ENCODE measurements at regions of chr18 and their contacts with region 1.

Region 1: GRCh38 chr18:3481696-3482210 is 31.8 kb downstream of the TGIF1 start:
- DNase-seq: no peak
- ATAC-seq: peak in 3 of 4 donors; percentile 58 to 67 (median 63)
- H3K4me3 ChIP-seq: no peak overlapping the region
- H3K27ac ChIP-seq: no peak overlapping the region
- H3K4me1 ChIP-seq: no peaks in the 10 kb centered on the region
- H3K27me3 ChIP-seq: peaks cover 0 to 3% (median 0%) of the 10 kb centered on the region in 3 donors
- CTCF ChIP-seq: peak; percentile 27

Region 2: DNA sequence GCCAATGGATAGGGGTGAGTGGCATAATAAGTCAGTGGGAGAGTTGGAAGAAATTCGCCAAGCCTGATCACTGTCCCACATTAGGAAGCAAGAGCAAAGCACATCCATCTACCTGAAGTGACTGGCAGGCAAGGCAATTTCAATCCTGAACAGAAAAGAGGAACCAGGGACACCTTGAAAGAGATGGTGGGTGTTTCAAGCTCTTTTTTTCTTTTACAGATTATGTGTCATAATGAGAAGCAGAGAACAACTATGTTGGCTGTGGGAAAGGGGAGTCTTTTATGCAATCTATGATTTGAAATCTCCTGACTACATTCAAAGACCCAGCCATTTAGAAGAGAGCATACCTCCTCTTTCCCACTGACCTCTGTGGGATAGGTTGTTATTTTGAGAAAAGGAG is 31.7 kb after region 1 on chr18:
- intact Hi-C with region 1: no loop called
- DNase-seq: no peak
- ATAC-seq: no peak
- H3K4me3 ChIP-seq: no peak overlapping the region
- H3K27ac ChIP-seq: no peak overlapping the region
- H3K4me1 ChIP-seq: no peaks in the 10 kb centered on the region
- H3K27me3 ChIP-seq: peaks cover 0 to 4% (median 0%) of the 10 kb centered on the region in 3 donors
- CTCF ChIP-seq: no peak

Region 3: GRCh38 chr18:3675446-3675845 is 193.7 kb after region 1 on chr18:
- intact Hi-C with region 1: loop called in 1 of 2 experiments (anchors 10 kb)
- DNase-seq: no peak
- ATAC-seq: no peak
- H3K4me3 ChIP-seq: no peak overlapping the region
- H3K27ac ChIP-seq: no peak overlapping the region
- H3K4me1 ChIP-seq: no peaks in the 10 kb centered on the region
- H3K27me3 ChIP-seq: peaks cover 0 to 9% (median 0%) of the 10 kb centered on the region in 3 donors
- CTCF ChIP-seq: no peak